GM12878 (cell line): ENCODE measurements at regions of chr18 and their contacts with region 1.

Region 1: GRCh38 chr18:56638271-56639093 is at the start of gene TXNL1:
- DNase-seq: peak; percentile 96
- ATAC-seq: peak; percentile 94
- H3K4me3 ChIP-seq: peak within 1 kb of the TSS; percentile 87
- H3K27ac ChIP-seq: peak within 1 kb of the TSS; percentile 90
- H3K4me1 ChIP-seq: peaks cover 5% of the 10 kb centered on the region
- H3K27me3 ChIP-seq: no peaks in the 10 kb centered on the region
- CTCF ChIP-seq: no peak
- EP300 ChIP-seq: 0 out of 4 replicates have a peak, but pooled peaks of 1 of the 2 experiments have one; percentile 44
- POLR2A ChIP-seq: peak; percentile 87
- RAD21 ChIP-seq: no peak
- polyA plus RNA-seq, gene TXNL1: 32.8 to 54.9 TPM

Region 2: GRCh38 chr18:56563568-56563967 is 74.9 kb before region 1 on chr18:
- CTCF ChIA-PET with region 1: no interaction called
- POLR2A ChIA-PET with region 1: no interaction called
- RAD21 ChIA-PET with region 1: no interaction called
- SMC1A ChIA-PET with region 1: no interaction called
- in situ Hi-C with region 1: no loop called
- intact Hi-C with region 1: no loop called
- DNase-seq: no peak
- ATAC-seq: peak; percentile 92
- H3K4me3 ChIP-seq: no peak overlapping the region
- H3K27ac ChIP-seq: no peak overlapping the region
- H3K4me1 ChIP-seq: no peaks in the 10 kb centered on the region
- H3K27me3 ChIP-seq: no peaks in the 10 kb centered on the region; a peak in 1 of 4 replicates
- CTCF ChIP-seq: peak; percentile 28 to 46 (median 29); a peak in 5 of 6 replicates
- EP300 ChIP-seq: no peak
- POLR2A ChIP-seq: no peak
- RAD21 ChIP-seq: peak; percentile 24; the same call in 1 of the 2 replicates

Region 3: DNA sequence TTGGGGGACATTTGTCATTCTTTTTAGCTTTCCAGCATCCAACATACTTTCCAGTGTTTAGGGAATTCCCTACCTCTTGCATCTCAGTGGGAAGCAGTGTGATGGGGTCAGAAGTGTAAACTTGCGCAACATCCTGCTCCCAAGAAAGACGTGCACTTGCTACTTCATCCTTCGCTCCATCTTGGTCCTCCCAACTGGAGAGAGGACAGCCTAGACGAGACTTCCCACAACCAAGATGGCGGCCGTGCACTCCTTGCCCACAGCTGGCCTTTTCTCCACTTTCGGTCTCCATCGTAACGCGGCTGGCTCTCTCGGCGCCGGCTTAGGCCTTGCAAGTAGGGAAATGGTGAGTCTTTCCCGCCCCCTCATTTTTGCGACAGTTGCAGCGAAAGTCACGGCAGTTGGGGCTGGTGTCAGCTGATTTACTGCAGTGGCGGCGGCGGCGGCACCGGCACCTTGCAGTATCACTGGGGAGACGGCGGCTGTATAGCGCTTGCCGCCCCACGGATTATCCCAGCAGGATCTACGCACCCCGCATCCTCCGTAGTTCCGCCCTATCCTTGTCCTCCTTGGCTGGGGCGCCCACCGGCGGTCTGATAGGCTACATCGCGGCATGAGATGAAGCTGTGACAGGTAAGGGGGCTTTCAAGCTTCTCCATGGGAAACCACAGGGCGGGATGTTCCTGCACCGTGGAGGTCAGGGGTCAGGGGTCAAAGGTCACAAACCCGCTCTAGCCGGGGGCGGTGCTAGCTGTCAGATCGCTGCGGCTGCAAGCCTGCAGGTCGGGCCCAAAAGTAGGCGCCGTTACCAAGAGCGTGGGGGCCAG is 12.7 kb after region 1 on chr18 and contains the start of gene WDR7:
- CTCF ChIA-PET with region 1: interaction called, 10 read pairs
- POLR2A ChIA-PET with region 1: interaction called, 39 read pairs
- RAD21 ChIA-PET with region 1: interaction called, 12 read pairs
- SMC1A ChIA-PET with region 1: interaction called, 24 read pairs
- in situ Hi-C with region 1: no loop called
- intact Hi-C with region 1: loop called (anchors 1 kb)
- DNase-seq: peak; percentile 91
- ATAC-seq: peak; percentile 96
- H3K4me3 ChIP-seq: peak within 1 kb of the TSS; percentile 67
- H3K27ac ChIP-seq: peak within 1 kb of the TSS; percentile 77
- H3K4me1 ChIP-seq: no peaks in the 10 kb centered on the region; the same call in none of the 2 replicates
- H3K27me3 ChIP-seq: no peaks in the 10 kb centered on the region
- CTCF ChIP-seq: no peak
- EP300 ChIP-seq: no peak
- POLR2A ChIP-seq: peak; percentile 86
- RAD21 ChIP-seq: no peak
- polyA plus RNA-seq, gene WDR7: 2.8 to 3.1 TPM